T-cell (primary cell): ENCODE measurements at regions of chr12 and their contacts with region 1.

Region 1: DNA sequence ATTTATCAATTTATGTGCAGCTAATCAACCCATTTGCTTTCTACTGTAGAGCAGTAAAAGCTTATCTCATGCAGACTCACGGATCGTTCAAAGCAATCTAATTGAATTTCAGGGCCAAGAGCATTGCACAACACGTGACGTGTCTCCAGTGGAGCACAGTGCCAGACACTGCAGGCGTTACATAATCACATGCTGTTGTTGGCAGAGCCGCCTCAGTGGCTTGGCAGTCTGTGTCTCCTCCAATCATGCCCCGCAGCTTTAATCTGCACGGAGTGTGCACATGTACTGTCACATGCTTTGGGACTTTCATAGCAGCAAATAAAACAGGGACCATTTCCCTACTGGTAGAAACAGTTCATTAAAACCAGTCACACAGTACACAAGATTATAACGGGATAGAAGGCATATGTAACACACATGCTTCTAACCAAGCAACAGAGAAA is 309.3 kb downstream of the ITPR2 start:
- DNase-seq: peak in 6 of 35 experiments; percentile 1 to 21 (median 5)
- ATAC-seq: no peak
- H3K4me3 ChIP-seq: no peak overlapping the region
- H3K4me3 Mint-ChIP-seq: no peak overlapping the region
- H3K27ac ChIP-seq: no peak overlapping the region
- H3K27ac Mint-ChIP-seq: no peak overlapping the region
- H3K4me1 ChIP-seq: no peaks in the 10 kb centered on the region
- H3K4me1 Mint-ChIP-seq: peaks cover 16 to 25% (median 17%) of the 10 kb centered on the region in 3 donors
- H3K27me3 ChIP-seq: no peaks in the 10 kb centered on the region
- H3K27me3 Mint-ChIP-seq: no peaks in the 10 kb centered on the region

Region 2: GRCh38 chr12:26416550-26416949 is 107.2 kb before region 1 on chr12:
- CTCF ChIA-PET with region 1: no interaction called
- POLR2A ChIA-PET with region 1: no interaction called
- DNase-seq: no peak
- ATAC-seq: no peak
- H3K4me3 ChIP-seq: no peak overlapping the region
- H3K4me3 Mint-ChIP-seq: no peak overlapping the region
- H3K27ac ChIP-seq: no peak overlapping the region
- H3K27ac Mint-ChIP-seq: no peak overlapping the region
- H3K4me1 ChIP-seq: no peaks in the 10 kb centered on the region
- H3K4me1 Mint-ChIP-seq: no peaks in the 10 kb centered on the region
- H3K27me3 ChIP-seq: no peaks in the 10 kb centered on the region
- H3K27me3 Mint-ChIP-seq: no peaks in the 10 kb centered on the region

Region 3: DNA sequence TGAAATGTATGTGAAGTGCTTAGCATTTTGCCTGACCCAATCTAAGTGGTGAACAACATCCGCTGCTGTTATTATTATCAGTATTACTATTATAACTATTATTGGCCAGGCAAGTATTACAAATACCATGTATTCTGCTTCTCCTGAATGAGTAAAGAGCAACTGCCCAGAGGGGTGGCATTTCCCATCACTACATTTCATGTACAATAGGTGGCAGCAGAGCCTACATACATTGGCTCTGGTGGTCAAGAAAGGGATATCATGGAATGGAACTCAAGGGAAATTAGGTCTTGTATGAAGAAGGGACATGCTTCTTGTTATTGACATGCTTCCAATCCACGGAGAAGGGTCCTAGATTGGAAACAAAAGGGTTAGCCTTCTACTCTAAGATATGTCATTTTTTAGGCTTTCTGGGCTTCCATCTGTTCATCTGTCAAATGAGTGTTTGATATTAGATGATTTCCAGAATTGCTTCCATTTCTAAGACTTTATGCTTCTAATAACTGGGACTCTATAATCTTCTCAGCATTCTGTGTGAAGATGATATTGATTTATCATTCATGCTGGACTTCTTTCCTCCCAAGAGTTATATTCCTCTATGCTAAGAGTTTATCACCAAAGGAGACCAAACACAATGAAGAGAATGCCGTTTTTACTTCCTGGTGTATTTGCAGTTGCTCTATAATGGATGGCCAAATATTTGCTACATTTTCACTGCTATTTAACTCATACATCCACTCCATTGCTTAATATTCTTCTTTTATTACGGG is 89.2 kb before region 1 on chr12:
- CTCF ChIA-PET with region 1: interaction called in 1 of 2 experiments, 11 read pairs
- POLR2A ChIA-PET with region 1: no interaction called
- DNase-seq: peak in 1 of 35 experiments; percentile 7
- ATAC-seq: no peak
- H3K4me3 ChIP-seq: no peak overlapping the region
- H3K4me3 Mint-ChIP-seq: no peak overlapping the region
- H3K27ac ChIP-seq: no peak overlapping the region
- H3K27ac Mint-ChIP-seq: no peak overlapping the region
- H3K4me1 ChIP-seq: no peaks in the 10 kb centered on the region
- H3K4me1 Mint-ChIP-seq: no peaks in the 10 kb centered on the region
- H3K27me3 ChIP-seq: no peaks in the 10 kb centered on the region
- H3K27me3 Mint-ChIP-seq: no peaks in the 10 kb centered on the region

Region 4: GRCh38 chr12:26935636-26936378 is 412.1 kb after region 1 on chr12:
- CTCF ChIA-PET with region 1: no interaction called
- POLR2A ChIA-PET with region 1: no interaction called
- DNase-seq: peak in 1 of 35 experiments; percentile 41
- ATAC-seq: no peak
- H3K4me3 ChIP-seq: no peak overlapping the region
- H3K4me3 Mint-ChIP-seq: peak overlapping the region; percentile 91 to 98 (median 95)
- H3K27ac ChIP-seq: peak overlapping the region; percentile 88
- H3K27ac Mint-ChIP-seq: peak overlapping the region; percentile 98 to 99
- H3K4me1 ChIP-seq: peaks cover 14 to 23% of the 10 kb centered on the region in 2 experiments
- H3K4me1 Mint-ChIP-seq: peaks cover 65 to 79% (median 67%) of the 10 kb centered on the region in 3 donors
- H3K27me3 ChIP-seq: no peaks in the 10 kb centered on the region
- H3K27me3 Mint-ChIP-seq: no peaks in the 10 kb centered on the region